H1 (cell line): ENCODE measurements at regions of chr17 and their contacts with region 1.

Region 1: DNA sequence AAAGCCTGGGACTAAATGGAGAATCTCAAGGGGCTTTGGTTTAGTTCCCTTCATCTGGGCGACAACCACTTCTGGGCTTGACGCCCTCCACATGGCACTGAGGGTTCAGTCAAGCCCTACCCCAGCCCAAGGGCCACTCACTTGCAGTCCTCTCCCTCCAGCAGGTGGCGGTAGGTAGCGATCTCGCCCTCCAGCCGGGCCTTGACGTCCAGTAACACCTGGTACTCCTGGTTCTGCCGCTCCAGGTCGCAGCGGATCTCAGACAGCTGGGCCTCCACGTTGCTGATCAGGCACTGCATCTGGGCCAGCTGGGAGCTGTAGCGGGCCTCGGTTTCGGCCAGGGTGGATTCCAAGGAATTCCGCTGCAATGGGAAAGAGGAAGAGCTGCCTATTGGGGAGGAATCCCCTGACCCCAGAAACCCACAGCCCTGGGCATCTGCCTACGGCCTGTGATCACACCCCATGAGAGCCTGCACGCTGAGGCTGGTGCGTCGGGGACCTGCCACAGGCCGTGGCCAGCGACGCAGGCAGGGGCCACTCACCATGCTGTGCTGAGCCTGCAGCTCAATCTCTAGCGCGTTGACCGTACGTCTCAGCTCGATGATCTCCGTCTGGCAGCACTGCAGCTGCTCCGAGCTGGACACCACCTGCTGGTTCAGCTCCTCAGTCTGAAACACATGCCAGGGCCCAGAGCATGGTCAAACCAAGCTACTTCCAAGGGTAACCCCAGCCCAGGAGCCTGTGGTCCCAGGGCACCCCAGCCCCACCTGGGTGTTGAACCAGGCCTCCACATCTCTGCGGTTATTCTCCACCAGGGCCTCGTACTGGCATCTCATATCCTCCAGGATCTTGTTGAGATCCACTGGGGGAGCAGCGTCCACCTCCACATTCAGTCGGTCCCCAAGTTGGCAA is 2.6 kb downstream of the KRT36 start:
- DNase-seq: peak; percentile 59 to 97
- H3K4me3 ChIP-seq: no peak overlapping the region
- H3K27ac ChIP-seq: no peak overlapping the region
- H3K4me1 ChIP-seq: no peaks in the 10 kb centered on the region; a peak in 2 of 7 replicates
- H3K27me3 ChIP-seq: peaks cover 0 to 12% (median 6%) of the 10 kb centered on the region in 4 experiments; a peak in 6 of 7 replicates
- CTCF ChIP-seq: peak; percentile 90 to 98 (median 93)
- EP300 ChIP-seq: no peak
- POLR2A ChIP-seq: no peak
- RAD21 ChIP-seq: peak; percentile 75 to 83

Region 2: DNA sequence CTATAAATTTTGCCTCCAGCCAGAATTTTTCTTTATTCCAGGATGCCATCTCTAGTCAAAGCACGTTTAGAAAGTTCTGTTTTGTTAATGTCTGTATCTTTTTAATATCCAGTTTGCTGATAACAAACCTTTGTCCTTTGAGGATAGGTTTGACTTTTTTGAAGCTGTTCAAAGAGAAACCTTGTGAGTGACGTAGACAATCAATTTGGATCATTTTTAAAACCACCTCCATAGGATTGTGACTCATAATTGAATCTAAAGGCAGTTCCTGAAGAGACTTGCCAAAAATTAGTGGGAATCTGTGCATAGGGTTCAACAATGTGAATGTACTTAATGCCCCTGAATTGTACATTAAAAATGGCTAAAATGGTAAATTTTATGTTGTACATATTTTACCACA is 95.5 kb before region 1 on chr17:
- CTCF ChIA-PET with region 1: no interaction called
- POLR2A ChIA-PET with region 1: no interaction called
- DNase-seq: no peak
- H3K4me3 ChIP-seq: no peak overlapping the region
- H3K27ac ChIP-seq: no peak overlapping the region
- H3K4me1 ChIP-seq: no peaks in the 10 kb centered on the region
- H3K27me3 ChIP-seq: no peaks in the 10 kb centered on the region
- CTCF ChIP-seq: no peak
- EP300 ChIP-seq: no peak
- POLR2A ChIP-seq: no peak
- RAD21 ChIP-seq: no peak

Region 3: GRCh38 chr17:41456208-41456607 is 30.9 kb before region 1 on chr17:
- CTCF ChIA-PET with region 1: interaction called, 10 read pairs
- POLR2A ChIA-PET with region 1: no interaction called
- DNase-seq: peak in 1 of 2 experiments; percentile 49
- H3K4me3 ChIP-seq: no peak overlapping the region
- H3K27ac ChIP-seq: no peak overlapping the region
- H3K4me1 ChIP-seq: no peaks in the 10 kb centered on the region
- H3K27me3 ChIP-seq: no peaks in the 10 kb centered on the region
- CTCF ChIP-seq: peak; percentile 45 to 70 (median 58)
- EP300 ChIP-seq: no peak
- POLR2A ChIP-seq: no peak
- RAD21 ChIP-seq: peak; percentile 64 to 70

Region 4: DNA sequence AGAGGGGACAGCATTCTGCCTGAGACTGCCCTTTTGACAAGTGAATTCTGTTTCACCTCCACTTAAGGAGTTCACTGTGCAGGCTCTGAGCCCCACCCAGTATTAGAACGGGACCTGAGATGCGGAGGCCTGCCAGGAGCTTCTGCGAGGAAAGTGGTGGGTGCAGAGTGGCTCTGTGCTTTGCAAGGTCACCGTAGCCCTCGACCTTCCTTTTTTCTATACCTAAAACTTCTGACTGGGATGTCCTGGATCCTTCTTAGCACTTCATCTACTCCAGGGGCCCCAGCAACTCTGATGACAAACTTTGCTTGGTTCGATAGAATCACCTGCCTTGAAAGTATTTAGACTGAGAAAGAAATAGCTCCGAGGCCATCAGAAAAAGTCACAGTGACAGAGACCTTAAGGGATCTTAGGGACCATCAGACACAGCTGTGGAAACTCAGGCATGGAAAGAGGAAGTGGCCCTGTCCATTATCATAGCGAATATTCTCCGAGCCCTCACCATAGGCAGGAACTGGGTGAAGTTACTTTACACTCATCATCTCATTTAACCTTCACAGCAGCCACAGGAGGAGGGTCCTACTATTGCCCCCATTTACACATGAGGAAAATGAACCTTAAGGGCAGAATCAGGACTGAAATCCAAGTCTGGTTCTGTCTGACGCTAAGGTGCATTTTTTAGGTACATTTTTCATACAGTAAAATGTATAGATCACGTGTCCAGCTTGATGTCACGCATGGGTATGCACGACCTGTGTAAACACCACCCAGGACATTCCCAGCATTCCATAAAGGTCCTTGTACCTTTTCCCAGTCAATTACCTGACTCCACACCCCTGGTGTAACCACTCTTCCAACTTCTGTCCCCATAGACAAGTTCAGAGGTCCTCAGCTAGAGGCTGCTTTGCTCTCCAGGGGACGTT is 19.0 kb after region 1 on chr17:
- CTCF ChIA-PET with region 1: interaction called, 63 read pairs
- POLR2A ChIA-PET with region 1: interaction called, 3 read pairs
- DNase-seq: no peak
- H3K4me3 ChIP-seq: no peak overlapping the region
- H3K27ac ChIP-seq: no peak overlapping the region
- H3K4me1 ChIP-seq: peaks cover 0 to 12% (median 4%) of the 10 kb centered on the region in 4 experiments; a peak in 6 of 7 replicates
- H3K27me3 ChIP-seq: no peaks in the 10 kb centered on the region
- CTCF ChIP-seq: no peak
- EP300 ChIP-seq: no peak
- POLR2A ChIP-seq: no peak
- RAD21 ChIP-seq: no peak

Region 5: GRCh38 chr17:41513168-41513547 is 26.1 kb after region 1 on chr17:
- CTCF ChIA-PET with region 1: interaction called, 10 read pairs
- POLR2A ChIA-PET with region 1: no interaction called
- DNase-seq: no peak
- H3K4me3 ChIP-seq: no peak overlapping the region
- H3K27ac ChIP-seq: no peak overlapping the region
- H3K4me1 ChIP-seq: peaks cover 0 to 5% (median 3%) of the 10 kb centered on the region in 4 experiments; a peak in 5 of 7 replicates
- H3K27me3 ChIP-seq: no peaks in the 10 kb centered on the region; a peak in 1 of 7 replicates
- CTCF ChIP-seq: no peak
- EP300 ChIP-seq: no peak
- POLR2A ChIP-seq: no peak
- RAD21 ChIP-seq: no peak

Region 6: GRCh38 chr17:41538565-41538991 is 51.5 kb after region 1 on chr17:
- CTCF ChIA-PET with region 1: interaction called, 427 read pairs
- POLR2A ChIA-PET with region 1: interaction called, 3 read pairs
- DNase-seq: no peak
- H3K4me3 ChIP-seq: no peak overlapping the region
- H3K27ac ChIP-seq: no peak overlapping the region
- H3K4me1 ChIP-seq: peaks cover 10 to 23% (median 16%) of the 10 kb centered on the region in 4 experiments
- H3K27me3 ChIP-seq: no peaks in the 10 kb centered on the region; a peak in 1 of 7 replicates
- CTCF ChIP-seq: no peak
- EP300 ChIP-seq: no peak
- POLR2A ChIP-seq: no peak
- RAD21 ChIP-seq: no peak